Heart left ventricle (tissue), 16 donors: ENCODE measurements at regions of chr16 and their contacts with region 1.

Region 1: GRCh38 chr16:21300309-21301167 is 22.4 kb upstream of the CRYM start:
- DNase-seq: peak; percentile 82 to 96 (median 95)
- ATAC-seq: peak; percentile 94 to 98 (median 96)
- H3K4me3 ChIP-seq: peak overlapping the region; percentile 52 to 78 (median 67)
- H3K27ac ChIP-seq: peak overlapping the region; percentile 48 to 88 (median 70)
- H3K4me1 ChIP-seq: peaks cover 0 to 19% (median 9%) of the 10 kb centered on the region in 12 donors
- H3K27me3 ChIP-seq: peaks cover 0 to 9% (median 0%) of the 10 kb centered on the region in 9 donors
- CTCF ChIP-seq: peak; percentile 63 to 95 (median 82)
- POLR2A ChIP-seq: peak in 1 of 2 donors; percentile 39

Region 2: GRCh38 chr16:20900299-20901067 is 400.1 kb before region 1 on chr16 and contains the starts of genes DCUN1D3 and LYRM1:
- intact Hi-C with region 1: loop called in 1 of 10 experiments (anchors 5 kb)
- DNase-seq: peak; percentile 96 to 98 (median 97)
- ATAC-seq: peak; percentile 92 to 96 (median 93)
- H3K4me3 ChIP-seq: peak within 1 kb of the TSS; percentile 68 to 93 (median 80)
- H3K27ac ChIP-seq: peak within 1 kb of the TSS; percentile 95 to 99 (median 97)
- H3K4me1 ChIP-seq: peaks cover 17 to 70% (median 55%) of the 10 kb centered on the region in 12 donors
- H3K27me3 ChIP-seq: no peaks in the 10 kb centered on the region
- CTCF ChIP-seq: no peak
- POLR2A ChIP-seq: peak in 1 of 2 donors; percentile 93
- total RNA-seq, gene DCUN1D3: 8.3 to 21.4 (median 11.0) TPM
- total RNA-seq, gene LYRM1: 40.2 to 124 (median 54.6) TPM

Region 3: GRCh38 chr16:21158208-21159110 is 142.1 kb before region 1 on chr16 and contains the start of gene LDAF1:
- intact Hi-C with region 1: loop called in 9 of 10 experiments (anchors 1 to 10 kb)
- DNase-seq: peak; percentile 85 to 93 (median 88)
- ATAC-seq: peak; percentile 81 to 93 (median 90)
- H3K4me3 ChIP-seq: peak within 1 kb of the TSS; percentile 74 to 95 (median 88)
- H3K27ac ChIP-seq: peak within 1 kb of the TSS; percentile 72 to 94 (median 88)
- H3K4me1 ChIP-seq: peaks cover 17 to 59% (median 40%) of the 10 kb centered on the region in 12 donors
- H3K27me3 ChIP-seq: no peaks in the 10 kb centered on the region
- CTCF ChIP-seq: peak in 3 of 12 donors; percentile 12 to 14 (median 13)
- POLR2A ChIP-seq: peak in 1 of 2 donors; percentile 69
- total RNA-seq, gene LDAF1: 87.0 to 334 (median 162) TPM

Region 4: DNA sequence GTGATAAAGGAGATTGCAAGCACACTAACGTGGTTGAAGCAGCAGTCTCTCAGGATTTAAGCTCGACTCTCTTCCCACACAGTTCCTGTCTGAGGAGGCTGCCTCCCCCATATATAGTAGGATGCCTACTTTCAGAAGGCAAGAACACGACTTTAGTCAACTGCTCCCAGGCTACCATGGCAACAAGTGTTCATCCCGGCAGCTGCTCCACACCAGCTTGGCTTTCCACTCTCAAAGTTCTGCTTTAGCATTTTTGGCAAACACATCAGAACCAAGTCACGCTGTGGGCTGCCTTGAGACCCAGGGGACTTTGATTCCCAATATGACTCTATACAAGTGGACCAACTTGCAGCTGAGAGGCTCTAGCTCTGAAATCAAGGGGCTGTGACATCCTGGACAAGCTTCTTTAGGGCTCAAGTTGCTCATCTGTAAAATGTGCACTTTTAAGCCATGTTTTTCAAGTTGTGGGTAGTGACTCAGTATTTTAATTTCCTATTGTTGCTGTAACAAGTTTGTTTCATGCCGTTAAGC is 105.7 kb before region 1 on chr16:
- intact Hi-C with region 1: loop called in 1 of 10 experiments (anchors 5 kb)
- DNase-seq: no peak
- ATAC-seq: no peak
- H3K4me3 ChIP-seq: no peak overlapping the region
- H3K27ac ChIP-seq: no peak overlapping the region
- H3K4me1 ChIP-seq: no peaks in the 10 kb centered on the region
- H3K27me3 ChIP-seq: peaks cover 0 to 3% (median 0%) of the 10 kb centered on the region in 9 donors
- CTCF ChIP-seq: no peak
- POLR2A ChIP-seq: no peak

Region 5: DNA sequence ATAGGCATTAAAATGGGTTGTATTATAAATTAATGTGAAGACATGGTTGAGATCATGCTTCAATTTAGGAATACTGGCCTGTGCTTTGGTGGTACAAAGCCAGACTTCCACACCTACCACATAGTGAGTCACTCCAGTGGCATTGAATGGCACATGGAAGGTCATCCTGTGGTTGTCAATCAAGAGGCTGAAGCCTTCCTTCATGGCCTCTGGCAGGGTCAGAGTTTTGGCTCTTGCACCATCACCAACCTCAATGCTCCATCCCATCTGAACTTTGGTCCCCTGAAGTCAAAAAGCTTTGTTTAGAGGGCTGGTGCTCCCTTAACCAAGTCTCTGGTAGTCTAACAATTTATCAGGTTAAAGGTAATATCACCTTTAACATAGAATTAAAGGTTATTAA is 95.2 kb before region 1 on chr16:
- intact Hi-C with region 1: no loop called
- DNase-seq: no peak
- ATAC-seq: no peak
- H3K4me3 ChIP-seq: no peak overlapping the region
- H3K27ac ChIP-seq: no peak overlapping the region
- H3K4me1 ChIP-seq: no peaks in the 10 kb centered on the region
- H3K27me3 ChIP-seq: peaks cover 0 to 2% (median 0%) of the 10 kb centered on the region in 9 donors
- CTCF ChIP-seq: no peak
- POLR2A ChIP-seq: no peak

Region 6: DNA sequence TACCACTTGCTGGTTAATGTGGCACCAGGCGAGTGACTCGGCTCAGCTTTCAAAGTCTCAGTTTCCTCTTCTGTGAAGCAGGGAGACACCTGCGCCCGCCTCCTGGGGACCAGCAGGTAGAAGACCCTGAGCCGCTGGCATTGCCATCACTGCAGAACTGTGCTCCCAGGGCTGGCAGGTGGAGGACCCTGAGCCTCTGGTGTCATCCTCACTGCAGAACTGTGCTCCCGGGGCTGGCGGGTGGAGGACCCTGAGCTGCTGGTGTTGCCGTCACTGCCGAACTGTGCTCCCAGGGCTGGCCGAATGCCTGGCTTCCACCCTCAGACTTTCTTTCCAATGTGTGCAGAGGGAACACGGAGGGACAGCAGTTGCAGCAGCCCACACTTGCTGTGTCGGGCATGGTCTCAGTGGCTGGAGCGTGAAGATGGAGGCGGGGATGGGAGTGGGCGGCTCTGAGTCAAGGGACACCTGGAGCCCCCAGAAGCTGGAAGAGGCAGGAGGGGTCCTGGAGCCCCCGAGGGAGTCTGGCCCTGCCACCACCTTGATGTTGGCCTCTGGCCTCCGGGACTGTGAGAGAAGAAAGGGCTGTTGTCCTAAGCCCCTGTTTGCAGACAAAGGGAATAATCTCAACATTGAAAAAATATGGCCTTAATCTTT is 223.0 kb after region 1 on chr16:
- intact Hi-C with region 1: no loop called
- DNase-seq: peak in 3 of 5 donors; percentile 28 to 62 (median 33)
- ATAC-seq: no peak
- H3K4me3 ChIP-seq: no peak overlapping the region
- H3K27ac ChIP-seq: no peak overlapping the region
- H3K4me1 ChIP-seq: peaks cover 0 to 22% (median 9%) of the 10 kb centered on the region in 12 donors
- H3K27me3 ChIP-seq: no peaks in the 10 kb centered on the region
- CTCF ChIP-seq: no peak
- POLR2A ChIP-seq: no peak